Activated CD8-positive, alpha-beta T cell treated with anti-CD3 and anti-CD28 coated beads for 36 hours (primary cell): ENCODE measurements at regions of chr6 and their contacts with region 1.

Region 1: DNA sequence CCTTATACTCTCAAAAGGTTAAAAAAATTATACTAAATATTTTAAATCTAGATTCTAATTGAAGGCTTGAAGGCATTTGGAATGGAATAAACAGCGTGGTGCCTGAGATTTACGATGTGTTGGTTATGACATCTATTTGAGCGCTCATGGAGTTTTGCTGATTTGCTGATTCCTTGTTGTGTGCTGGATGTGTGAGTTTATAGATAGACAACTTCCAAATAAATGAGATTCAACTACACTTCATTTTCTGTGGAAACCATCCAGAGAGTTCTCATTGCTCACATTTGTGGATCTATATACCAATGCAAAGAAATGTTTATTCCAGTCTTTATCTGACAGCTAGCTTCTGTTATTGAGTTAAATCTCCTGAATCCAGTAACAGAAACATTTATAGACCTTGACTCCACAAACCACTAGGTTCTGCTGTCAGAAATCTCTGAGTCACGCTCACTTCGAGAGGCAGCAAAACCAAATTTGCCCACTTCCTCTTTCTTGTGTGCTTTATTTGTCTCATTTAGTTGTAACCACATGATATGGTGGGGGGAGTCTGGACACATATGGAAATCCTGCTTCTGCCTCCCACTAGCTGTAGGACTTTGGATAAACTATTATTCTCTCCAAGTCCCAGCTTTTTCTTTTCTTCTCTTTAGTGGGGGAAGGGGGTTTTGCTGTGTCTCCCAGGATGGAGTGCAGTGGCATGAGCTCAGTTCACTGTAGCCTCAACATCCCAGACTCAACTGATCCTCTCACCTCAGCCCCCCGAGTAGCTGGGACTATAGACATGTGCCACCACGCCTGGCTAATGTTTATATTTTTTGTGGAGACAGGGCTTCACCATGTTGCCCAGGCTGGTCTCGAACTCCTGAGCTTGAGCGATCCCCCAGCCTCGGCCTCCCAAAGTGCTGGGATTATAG is 54.5 kb downstream of the IPCEF1 start:
- DNase-seq: peak; percentile 63
- ATAC-seq: peak; percentile 95
- H3K4me3 Mint-ChIP-seq: no peak overlapping the region
- H3K27ac Mint-ChIP-seq: no peak overlapping the region
- H3K4me1 Mint-ChIP-seq: peaks cover 15% of the 10 kb centered on the region
- H3K27me3 Mint-ChIP-seq: no peaks in the 10 kb centered on the region
- CTCF ChIP-seq: no peak

Region 2: DNA sequence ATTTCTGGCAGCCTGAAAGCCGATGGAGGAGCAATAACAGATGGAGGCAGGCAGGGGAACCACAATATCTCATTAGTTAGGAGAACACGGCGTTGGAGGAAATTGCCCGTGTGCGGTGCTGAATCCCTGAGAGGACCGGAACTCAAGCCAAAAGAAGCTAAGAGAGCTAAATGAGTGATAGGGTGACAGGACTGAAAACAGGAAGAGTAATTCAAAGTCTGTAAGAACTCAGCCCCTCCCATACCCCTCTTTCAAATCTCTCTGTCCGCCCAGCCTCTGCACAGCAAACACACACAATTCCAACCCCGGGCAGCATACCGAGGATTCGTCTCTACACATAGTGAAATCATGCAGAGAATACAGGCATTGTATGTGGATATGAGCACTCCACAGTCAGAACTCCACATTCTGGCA is 57.1 kb after region 1 on chr6:
- CTCF ChIA-PET with region 1: no interaction called
- POLR2A ChIA-PET with region 1: no interaction called
- intact Hi-C with region 1: loop called (anchors 5 kb)
- DNase-seq: no peak
- ATAC-seq: peak; percentile 48
- H3K4me3 Mint-ChIP-seq: peak overlapping the region; percentile 35
- H3K27ac Mint-ChIP-seq: no peak overlapping the region
- H3K4me1 Mint-ChIP-seq: peaks cover 43% of the 10 kb centered on the region
- H3K27me3 Mint-ChIP-seq: peaks cover 8% of the 10 kb centered on the region
- CTCF ChIP-seq: no peak

Region 3: GRCh38 chr6:155219858-155220301 is 917.8 kb after region 1 on chr6:
- CTCF ChIA-PET with region 1: no interaction called
- POLR2A ChIA-PET with region 1: no interaction called
- intact Hi-C with region 1: no loop called
- DNase-seq: no peak
- ATAC-seq: no peak
- H3K4me3 Mint-ChIP-seq: no peak overlapping the region
- H3K27ac Mint-ChIP-seq: no peak overlapping the region
- H3K4me1 Mint-ChIP-seq: peaks cover 18% of the 10 kb centered on the region
- H3K27me3 Mint-ChIP-seq: peaks cover 10% of the 10 kb centered on the region
- CTCF ChIP-seq: no peak